Heart left ventricle (tissue), 16 donors: ENCODE measurements at regions of chr2 and their contacts with region 1.

Region 1: DNA sequence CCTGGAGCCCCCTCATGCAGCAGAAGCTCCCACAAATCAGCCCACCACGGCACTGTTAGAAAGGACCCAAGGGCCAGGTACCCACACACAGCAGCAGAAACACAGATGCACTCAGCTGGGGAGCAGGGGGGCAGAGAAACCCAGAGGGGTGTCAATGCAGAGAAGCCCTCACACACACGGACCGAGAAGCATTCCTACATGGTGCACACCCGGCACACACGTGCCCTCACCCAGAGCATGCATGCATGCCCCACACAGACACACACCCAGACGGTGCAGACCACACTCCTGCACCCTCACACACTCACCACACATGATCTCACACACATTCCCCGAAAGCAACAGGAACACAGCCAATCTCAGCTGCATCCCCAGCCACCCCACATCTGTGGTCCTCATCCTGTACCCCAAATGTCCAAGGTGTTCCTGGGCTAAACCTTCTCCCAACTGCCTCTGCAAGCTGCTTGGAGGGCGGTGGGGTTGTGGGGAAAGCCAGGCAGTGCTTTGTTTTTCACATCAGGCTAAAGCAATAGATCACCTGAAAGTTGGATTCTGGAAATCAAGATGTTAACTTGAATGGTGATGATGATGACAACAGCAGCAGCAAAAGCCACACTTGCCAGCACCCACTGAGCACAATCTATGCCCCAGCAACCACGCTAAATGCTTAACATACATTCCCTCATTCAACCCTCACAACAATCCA is 102.3 kb downstream of the ZFP36L2 start:
- DNase-seq: peak in 1 of 5 donors; percentile 31
- ATAC-seq: no peak
- H3K4me3 ChIP-seq: no peak overlapping the region
- H3K27ac ChIP-seq: no peak overlapping the region
- H3K4me1 ChIP-seq: peaks cover 0 to 38% (median 11%) of the 10 kb centered on the region in 12 donors
- H3K27me3 ChIP-seq: no peaks in the 10 kb centered on the region
- CTCF ChIP-seq: no peak
- POLR2A ChIP-seq: no peak

Region 2: DNA sequence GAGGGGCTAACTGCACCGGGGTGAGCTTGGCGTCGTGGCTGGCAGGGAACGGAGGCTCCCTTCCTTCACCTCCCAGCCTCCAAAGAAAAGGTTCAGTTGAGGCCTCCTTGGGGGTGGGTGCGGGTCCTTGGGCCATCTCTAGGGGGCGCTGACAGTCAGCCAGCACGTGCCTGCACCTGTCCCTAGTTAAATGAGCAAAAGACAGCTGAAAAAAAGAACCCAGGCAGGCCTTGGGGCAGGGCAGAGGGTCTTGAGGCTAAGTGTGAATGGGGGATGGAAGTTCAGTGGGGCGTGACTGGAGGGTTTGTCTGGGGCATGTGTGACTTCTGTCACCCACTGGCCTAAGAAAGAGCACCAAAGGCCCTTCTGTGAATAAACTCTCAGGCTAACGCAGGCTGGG is 45.9 kb after region 1 on chr2:
- intact Hi-C with region 1: no loop called
- DNase-seq: peak in 1 of 5 donors; percentile 69
- ATAC-seq: no peak
- H3K4me3 ChIP-seq: no peak overlapping the region
- H3K27ac ChIP-seq: peak overlapping the region in 5 of 12 donors; percentile 34 to 85 (median 67)
- H3K4me1 ChIP-seq: peaks cover 0 to 73% (median 31%) of the 10 kb centered on the region in 12 donors
- H3K27me3 ChIP-seq: no peaks in the 10 kb centered on the region
- CTCF ChIP-seq: peak; percentile 15 to 54 (median 38)
- POLR2A ChIP-seq: no peak

Region 3: GRCh38 chr2:43412121-43412753 is 288.1 kb after region 1 on chr2:
- intact Hi-C with region 1: no loop called
- DNase-seq: no peak
- ATAC-seq: peak; percentile 53 to 70 (median 58)
- H3K4me3 ChIP-seq: no peak overlapping the region
- H3K27ac ChIP-seq: peak overlapping the region in 6 of 12 donors; percentile 19 to 53 (median 25)
- H3K4me1 ChIP-seq: peaks cover 0 to 64% (median 46%) of the 10 kb centered on the region in 12 donors
- H3K27me3 ChIP-seq: no peaks in the 10 kb centered on the region
- CTCF ChIP-seq: no peak
- POLR2A ChIP-seq: no peak

Region 4: GRCh38 chr2:43495727-43496126 is 371.6 kb after region 1 on chr2:
- intact Hi-C with region 1: loop called in 1 of 10 experiments (anchors 5 kb)
- DNase-seq: no peak
- ATAC-seq: no peak
- H3K4me3 ChIP-seq: no peak overlapping the region
- H3K27ac ChIP-seq: no peak overlapping the region
- H3K4me1 ChIP-seq: peaks cover 0 to 5% (median 0%) of the 10 kb centered on the region in 12 donors
- H3K27me3 ChIP-seq: no peaks in the 10 kb centered on the region
- CTCF ChIP-seq: no peak
- POLR2A ChIP-seq: no peak